ENCODE measurements at regions of chr6 and their contacts with region 1.

Region 1: GRCh38 chr6:32439602-32440214 is at the start of gene HLA-DRA:
- DNase-seq: peak; percentile 99
- ATAC-seq: peak; percentile 71
- H3K4me3 ChIP-seq: peak within 1 kb of the TSS; percentile 99
- H3K27ac ChIP-seq: peak within 1 kb of the TSS; percentile 100
- H3K4me1 ChIP-seq: peaks cover 29% of the 10 kb centered on the region
- H3K27me3 ChIP-seq: no peaks in the 10 kb centered on the region
- CTCF ChIP-seq: no peak
- EP300 ChIP-seq: peak; percentile 66 to 68; a peak in 3 of 4 replicates
- POLR2A ChIP-seq: peak; percentile 95
- RAD21 ChIP-seq: no peak
- polyA plus RNA-seq, gene HLA-DRA: 4,131 to 6,024 TPM

Region 2: DNA sequence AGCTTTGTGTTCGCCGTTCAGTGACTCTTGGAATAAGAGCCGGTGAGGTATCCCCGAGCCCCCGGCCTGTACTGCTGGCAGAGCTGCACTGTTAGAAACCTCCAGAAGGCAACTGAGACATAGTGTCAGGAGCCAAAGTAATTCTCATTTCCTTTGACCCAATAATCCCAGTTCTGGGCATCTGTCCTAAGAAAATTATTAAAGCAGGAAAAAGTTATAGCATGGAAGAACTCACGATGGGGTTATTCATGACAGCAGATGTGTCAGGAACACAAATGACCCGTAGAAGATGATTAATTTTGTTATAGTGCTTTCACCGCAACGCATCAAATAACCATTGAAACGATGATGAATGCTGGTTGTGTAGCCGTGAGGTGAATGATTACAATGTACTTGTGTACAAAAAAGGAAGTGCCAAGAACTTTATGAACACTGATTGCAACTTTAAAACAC is 381.2 kb before region 1 on chr6:
- CTCF ChIA-PET with region 1: no interaction called
- POLR2A ChIA-PET with region 1: no interaction called
- RAD21 ChIA-PET with region 1: no interaction called
- SMC1A ChIA-PET with region 1: no interaction called
- in situ Hi-C with region 1: no loop called
- intact Hi-C with region 1: no loop called
- DNase-seq: no peak
- ATAC-seq: no peak
- H3K4me3 ChIP-seq: no peak overlapping the region
- H3K27ac ChIP-seq: no peak overlapping the region
- H3K4me1 ChIP-seq: no peaks in the 10 kb centered on the region
- H3K27me3 ChIP-seq: peaks cover 0 to 2% of the 10 kb centered on the region in 2 experiments; a peak in 2 of 4 replicates
- CTCF ChIP-seq: no peak
- EP300 ChIP-seq: no peak
- POLR2A ChIP-seq: no peak
- RAD21 ChIP-seq: no peak

Region 3: GRCh38 chr6:32313964-32314363 is 125.7 kb before region 1 on chr6:
- CTCF ChIA-PET with region 1: no interaction called
- POLR2A ChIA-PET with region 1: no interaction called
- RAD21 ChIA-PET with region 1: no interaction called
- SMC1A ChIA-PET with region 1: no interaction called
- in situ Hi-C with region 1: no loop called
- intact Hi-C with region 1: no loop called
- DNase-seq: no peak
- ATAC-seq: no peak
- H3K4me3 ChIP-seq: no peak overlapping the region
- H3K27ac ChIP-seq: no peak overlapping the region
- H3K4me1 ChIP-seq: no peaks in the 10 kb centered on the region
- H3K27me3 ChIP-seq: peaks cover 1 to 5% of the 10 kb centered on the region in 2 experiments; a peak in 2 of 4 replicates
- CTCF ChIP-seq: no peak
- EP300 ChIP-seq: no peak
- POLR2A ChIP-seq: no peak
- RAD21 ChIP-seq: no peak

Region 4: DNA sequence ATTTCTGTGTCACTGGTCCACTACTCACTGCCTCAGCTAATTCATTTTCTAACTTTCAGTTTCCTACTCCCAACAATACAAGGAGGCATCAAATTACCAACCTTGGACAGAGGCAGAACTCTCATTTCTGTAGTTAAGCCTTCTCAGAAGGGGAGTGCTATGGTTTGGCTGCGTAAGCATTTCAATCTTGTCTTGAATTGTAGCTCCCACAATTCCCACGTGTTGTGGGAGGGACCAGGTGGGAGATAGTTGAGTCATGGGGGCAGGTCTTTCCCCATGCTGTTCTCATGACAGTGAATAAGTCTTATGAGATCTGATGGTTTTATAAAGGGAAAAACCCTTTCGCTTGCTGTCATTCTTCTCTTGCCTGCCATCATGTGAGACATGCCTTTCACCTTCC is 22.9 kb after region 1 on chr6:
- CTCF ChIA-PET with region 1: interaction called, 3 read pairs
- POLR2A ChIA-PET with region 1: interaction called, 64 read pairs
- RAD21 ChIA-PET with region 1: interaction called, 7 read pairs
- SMC1A ChIA-PET with region 1: interaction called, 6 read pairs
- in situ Hi-C with region 1: no loop called
- intact Hi-C with region 1: no loop called
- DNase-seq: peak; percentile 76
- ATAC-seq: peak; percentile 94
- H3K4me3 ChIP-seq: no peak overlapping the region
- H3K27ac ChIP-seq: no peak overlapping the region
- H3K4me1 ChIP-seq: peaks cover 6% of the 10 kb centered on the region
- H3K27me3 ChIP-seq: no peaks in the 10 kb centered on the region
- CTCF ChIP-seq: no peak
- EP300 ChIP-seq: peak; percentile 13 to 74; a peak in 2 of 4 replicates
- POLR2A ChIP-seq: no peak
- RAD21 ChIP-seq: no peak

Region 5: GRCh38 chr6:32609731-32610640 is 170.3 kb after region 1 on chr6:
- CTCF ChIA-PET with region 1: no interaction called
- POLR2A ChIA-PET with region 1: interaction called, 4 read pairs
- RAD21 ChIA-PET with region 1: interaction called, 4 read pairs
- SMC1A ChIA-PET with region 1: interaction called, 7 read pairs
- in situ Hi-C with region 1: no loop called
- intact Hi-C with region 1: loop called (anchors 1 kb)
- DNase-seq: peak; percentile 100
- ATAC-seq: peak; percentile 84
- H3K4me3 ChIP-seq: peak overlapping the region; percentile 3; the same call in 1 of the 2 replicates
- H3K27ac ChIP-seq: peak overlapping the region; percentile 95
- H3K4me1 ChIP-seq: peaks cover 17% of the 10 kb centered on the region
- H3K27me3 ChIP-seq: no peaks in the 10 kb centered on the region
- CTCF ChIP-seq: no peak
- EP300 ChIP-seq: peak; percentile 30 to 68; a peak in 2 of 4 replicates
- POLR2A ChIP-seq: peak; percentile 59; the same call in 1 of the 2 replicates
- RAD21 ChIP-seq: no peak

Region 6: DNA sequence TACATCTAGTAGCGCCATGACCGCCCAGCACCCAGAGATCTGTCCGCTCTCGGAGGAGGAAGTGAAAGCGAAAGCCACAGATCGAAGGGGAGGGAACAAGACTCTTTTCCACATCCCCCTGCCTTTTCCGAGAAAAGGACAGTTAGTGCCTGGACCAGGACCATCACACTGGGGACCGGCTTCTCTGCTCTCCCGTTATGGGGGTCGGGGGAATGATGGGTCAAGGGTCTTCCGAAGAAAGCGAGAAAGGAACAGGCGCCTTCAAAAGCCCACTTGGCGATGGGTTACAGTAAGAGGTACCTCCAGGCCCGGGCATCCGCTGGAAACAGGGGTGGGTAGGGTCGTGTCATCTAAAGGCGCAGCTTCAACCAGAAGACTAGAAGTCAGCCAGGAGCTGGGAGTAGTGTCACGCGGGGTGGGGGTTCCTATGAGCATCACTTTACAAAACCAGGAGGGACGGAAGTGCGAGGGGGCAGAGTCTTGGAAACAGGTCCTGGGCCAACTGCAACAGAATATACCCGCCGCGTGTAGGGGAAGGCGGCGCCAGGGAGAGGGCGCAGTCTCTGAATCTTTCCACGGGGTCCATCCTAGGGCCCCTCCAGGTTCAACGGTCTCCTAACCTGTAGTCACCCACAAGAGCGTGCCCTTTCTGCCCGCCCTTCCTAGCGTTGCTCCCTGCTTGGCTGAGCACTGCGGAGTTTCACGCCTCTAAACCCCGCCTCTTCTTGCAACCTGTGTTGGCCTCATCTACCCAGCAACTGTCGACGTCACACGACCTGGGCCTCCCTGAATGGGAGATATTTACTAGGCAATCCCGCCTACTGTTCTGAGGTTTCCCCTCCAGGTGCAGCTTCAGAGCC is 404.5 kb after region 1 on chr6 and contains the start of gene PSMB8:
- CTCF ChIA-PET with region 1: no interaction called
- POLR2A ChIA-PET with region 1: interaction called, 10 read pairs
- RAD21 ChIA-PET with region 1: interaction called, 3 read pairs
- SMC1A ChIA-PET with region 1: interaction called, 3 read pairs
- in situ Hi-C with region 1: no loop called
- intact Hi-C with region 1: no loop called
- DNase-seq: peak; percentile 98
- ATAC-seq: peak; percentile 75
- H3K4me3 ChIP-seq: peak within 1 kb of the TSS; percentile 96
- H3K27ac ChIP-seq: peak within 1 kb of the TSS; percentile 96
- H3K4me1 ChIP-seq: peaks cover 67% of the 10 kb centered on the region
- H3K27me3 ChIP-seq: no peaks in the 10 kb centered on the region
- CTCF ChIP-seq: no peak
- EP300 ChIP-seq: peak in 1 of 2 experiments; percentile 57; a peak in 1 of 4 replicates
- POLR2A ChIP-seq: peak; percentile 81
- RAD21 ChIP-seq: no peak
- polyA plus RNA-seq, gene PSMB8: 353 to 557 TPM

Measured in GM12878 (cell line).